Aorta (tissue), 5 donors: ENCODE measurements at regions of chr11 and their contacts with region 1.

Region 1: DNA sequence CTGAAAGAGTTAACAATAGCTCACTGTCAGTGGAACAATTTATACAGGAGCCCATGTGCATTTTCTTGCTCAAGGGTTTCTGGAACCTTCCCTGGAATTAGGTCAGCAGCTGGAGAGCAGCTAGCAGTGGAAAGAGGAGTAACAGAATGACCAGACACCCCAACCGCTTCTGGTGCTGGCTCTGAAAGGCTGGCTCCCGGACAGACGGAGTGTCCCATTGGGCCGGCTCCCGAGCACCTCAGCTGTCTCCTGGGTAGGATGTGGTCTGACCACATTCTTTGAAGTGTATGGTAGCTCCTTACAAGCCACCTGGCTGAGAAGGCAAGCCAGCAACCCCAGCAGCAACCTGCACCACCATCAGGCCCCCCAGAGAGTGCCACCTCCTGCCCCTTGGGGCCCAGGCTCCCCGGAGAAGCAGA is 44.7 kb downstream of the ABTB2 start:
- DNase-seq: no peak
- ATAC-seq: no peak
- H3K4me3 ChIP-seq: no peak overlapping the region
- H3K27ac ChIP-seq: no peak overlapping the region
- H3K4me1 ChIP-seq: no peaks in the 10 kb centered on the region
- H3K27me3 ChIP-seq: no peaks in the 10 kb centered on the region

Region 2: GRCh38 chr11:34274723-34275401 is 38.2 kb before region 1 on chr11:
- intact Hi-C with region 1: loop called in 1 of 2 experiments (anchors 5 kb)
- DNase-seq: peak; percentile 92 to 93
- ATAC-seq: peak; percentile 91
- H3K4me3 ChIP-seq: no peak overlapping the region
- H3K27ac ChIP-seq: peak overlapping the region in 1 of 2 donors; percentile 65
- H3K4me1 ChIP-seq: no peaks in the 10 kb centered on the region
- H3K27me3 ChIP-seq: no peaks in the 10 kb centered on the region

Region 3: GRCh38 chr11:34344768-34345539 is 31.8 kb after region 1 on chr11:
- intact Hi-C with region 1: loop called in 1 of 2 experiments (anchors 5 kb)
- DNase-seq: peak; percentile 66 to 80
- ATAC-seq: no peak
- H3K4me3 ChIP-seq: no peak overlapping the region
- H3K27ac ChIP-seq: peak overlapping the region; percentile 72 to 93
- H3K4me1 ChIP-seq: peaks cover 12 to 18% of the 10 kb centered on the region in 2 donors
- H3K27me3 ChIP-seq: no peaks in the 10 kb centered on the region

Region 4: DNA sequence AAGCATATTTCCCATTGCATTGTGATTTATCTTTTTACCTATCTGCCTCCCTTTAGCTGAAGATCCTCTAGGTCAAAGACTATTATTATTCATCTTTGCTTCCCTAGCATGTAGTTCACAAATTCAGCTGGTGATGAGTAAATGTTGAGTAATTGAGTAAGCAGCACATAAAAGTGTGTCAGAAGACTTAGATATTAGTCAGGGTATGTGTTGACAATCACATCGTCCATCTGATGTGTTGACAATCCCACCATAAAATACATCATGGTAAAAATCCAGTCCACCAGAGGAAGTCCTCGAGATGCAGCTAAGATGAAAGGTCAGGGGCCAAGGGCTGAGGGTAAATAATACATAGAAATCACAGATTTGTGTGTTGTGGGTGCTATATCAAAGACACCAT is 67.6 kb after region 1 on chr11:
- intact Hi-C with region 1: no loop called
- DNase-seq: no peak
- ATAC-seq: no peak
- H3K4me3 ChIP-seq: no peak overlapping the region
- H3K27ac ChIP-seq: no peak overlapping the region
- H3K4me1 ChIP-seq: peaks cover 0 to 3% of the 10 kb centered on the region in 2 donors
- H3K27me3 ChIP-seq: no peaks in the 10 kb centered on the region